Mammary epithelial cell (primary cell): ENCODE measurements at regions of chr9 and their contacts with region 1.

Region 1: GRCh38 chr9:91890662-91891061 is 59.4 kb downstream of the ROR2 start:
- DNase-seq: no peak
- H3K4me3 ChIP-seq: no peak overlapping the region
- H3K27ac ChIP-seq: no peak overlapping the region
- H3K4me1 ChIP-seq: no peaks in the 10 kb centered on the region
- H3K27me3 ChIP-seq: peaks cover 2% of the 10 kb centered on the region
- CTCF ChIP-seq: no peak

Region 2: GRCh38 chr9:91824601-91825305 is 65.9 kb before region 1 on chr9:
- CTCF ChIA-PET with region 1: no interaction called
- dilution Hi-C with region 1: loop called (anchors 5 kb)
- in situ Hi-C with region 1: no loop called
- intact Hi-C with region 1: no loop called
- DNase-seq: no peak
- H3K4me3 ChIP-seq: no peak overlapping the region
- H3K27ac ChIP-seq: no peak overlapping the region
- H3K4me1 ChIP-seq: peaks cover 6% of the 10 kb centered on the region
- H3K27me3 ChIP-seq: no peaks in the 10 kb centered on the region
- CTCF ChIP-seq: no peak